Activated CD4-positive, alpha-beta memory T cell treated with anti-CD3 and anti-CD28 coated beads, Interleukin-2, amount 10 ng/mL, durations not matched to agents 7 days and 5 days (primary cell): ENCODE measurements at regions of chr10 and their contacts with region 1.

Region 1: DNA sequence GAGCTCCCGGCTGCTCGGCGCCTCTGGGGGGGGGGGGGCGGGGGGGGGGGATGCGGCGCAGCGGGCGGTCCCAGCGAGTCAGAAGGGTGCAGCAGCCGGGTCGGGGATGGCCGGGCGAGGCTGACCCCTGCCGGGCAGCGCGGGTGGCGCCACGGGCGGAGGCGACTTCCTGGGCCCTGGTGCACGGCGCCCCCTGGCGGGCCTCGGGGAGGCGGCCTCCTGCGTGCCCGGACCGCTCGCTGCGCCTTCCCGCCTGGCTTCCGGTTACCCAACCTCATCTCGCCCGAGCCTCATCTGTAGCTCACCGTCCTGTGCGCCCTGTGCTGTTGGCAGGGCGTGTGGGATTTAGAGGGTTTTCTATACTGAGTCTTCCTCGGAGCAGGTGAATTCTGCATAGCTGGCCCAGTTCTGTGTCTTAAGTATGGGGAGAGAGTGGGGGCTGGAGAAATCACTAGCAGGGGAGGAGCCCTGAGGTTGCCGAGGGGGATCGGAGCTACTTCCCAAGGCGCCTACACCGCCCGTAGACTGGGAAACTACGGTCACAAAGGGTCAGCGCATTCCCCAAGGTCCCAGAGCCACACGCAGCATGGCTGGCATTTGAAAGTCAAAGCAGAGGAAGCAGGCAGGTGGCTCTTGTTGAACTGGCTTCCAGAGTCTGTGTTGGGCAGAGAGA is 28.3 kb upstream of the WDFY4 start:
- DNase-seq: peak; percentile 93
- H3K4me3 Mint-ChIP-seq: peak overlapping the region; percentile 58
- H3K27ac Mint-ChIP-seq: no peak overlapping the region
- H3K4me1 Mint-ChIP-seq: peaks cover 18% of the 10 kb centered on the region
- H3K27me3 Mint-ChIP-seq: peaks cover 25% of the 10 kb centered on the region

Region 2: GRCh38 chr10:48551861-48552591 is 104.4 kb before region 1 on chr10:
- CTCF ChIA-PET with region 1: interaction called, 98 read pairs
- POLR2A ChIA-PET with region 1: interaction called, 3 read pairs
- DNase-seq: peak; percentile 22
- H3K4me3 Mint-ChIP-seq: no peak overlapping the region
- H3K27ac Mint-ChIP-seq: no peak overlapping the region
- H3K4me1 Mint-ChIP-seq: no peaks in the 10 kb centered on the region
- H3K27me3 Mint-ChIP-seq: peaks cover 2% of the 10 kb centered on the region

Region 3: DNA sequence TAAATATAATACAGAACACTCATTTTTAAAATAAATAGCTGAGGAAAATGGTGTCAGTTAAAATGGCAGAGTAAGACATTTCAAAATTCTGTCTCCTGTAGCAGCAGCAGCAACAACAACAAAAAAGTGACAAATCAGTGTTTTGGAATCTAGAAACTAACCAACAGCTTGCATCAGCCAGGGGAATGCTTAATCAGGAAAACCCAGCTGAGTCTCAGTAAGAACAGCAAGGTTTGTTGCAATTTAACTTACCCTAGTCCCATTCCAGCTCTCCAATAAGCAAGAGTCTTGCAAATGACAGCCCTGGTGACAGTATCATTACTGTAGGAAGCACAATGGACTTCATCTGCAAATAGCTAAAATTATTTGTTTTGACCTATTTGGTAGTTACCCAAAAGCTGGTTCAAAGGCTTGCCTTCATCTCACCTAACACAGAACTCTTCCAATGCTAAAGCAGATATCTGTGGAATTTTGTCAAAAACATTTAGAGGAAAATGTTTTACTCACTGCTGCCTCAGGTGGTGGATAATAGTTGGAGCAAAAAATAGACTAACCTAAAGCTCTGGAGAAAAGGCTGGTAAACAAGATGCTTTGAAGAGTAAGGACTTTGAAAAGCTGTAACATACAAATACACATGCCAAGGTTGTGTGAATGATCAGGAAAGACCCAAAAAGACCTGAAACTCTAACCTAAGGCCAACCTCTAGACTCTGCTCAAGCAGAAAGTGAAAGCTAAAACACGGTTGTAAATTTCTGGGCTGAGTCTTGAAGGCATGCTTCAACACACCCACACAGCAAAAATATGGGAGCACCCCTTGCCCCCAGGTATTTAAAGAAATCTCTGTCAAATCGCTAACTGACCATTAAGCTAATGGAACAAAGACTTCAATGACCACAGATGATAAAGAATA is 41.6 kb before region 1 on chr10:
- CTCF ChIA-PET with region 1: interaction called, 125 read pairs
- POLR2A ChIA-PET with region 1: no interaction called
- DNase-seq: no peak
- H3K4me3 Mint-ChIP-seq: no peak overlapping the region
- H3K27ac Mint-ChIP-seq: no peak overlapping the region
- H3K4me1 Mint-ChIP-seq: peaks cover 4% of the 10 kb centered on the region
- H3K27me3 Mint-ChIP-seq: peaks cover 39% of the 10 kb centered on the region

Region 4: GRCh38 chr10:48634198-48634983 is 22.0 kb before region 1 on chr10:
- CTCF ChIA-PET with region 1: interaction called, 42 read pairs
- POLR2A ChIA-PET with region 1: no interaction called
- DNase-seq: peak; percentile 57
- H3K4me3 Mint-ChIP-seq: peak overlapping the region; percentile 20
- H3K27ac Mint-ChIP-seq: peak overlapping the region; percentile 73
- H3K4me1 Mint-ChIP-seq: peaks cover 31% of the 10 kb centered on the region
- H3K27me3 Mint-ChIP-seq: peaks cover 17% of the 10 kb centered on the region

Region 5: DNA sequence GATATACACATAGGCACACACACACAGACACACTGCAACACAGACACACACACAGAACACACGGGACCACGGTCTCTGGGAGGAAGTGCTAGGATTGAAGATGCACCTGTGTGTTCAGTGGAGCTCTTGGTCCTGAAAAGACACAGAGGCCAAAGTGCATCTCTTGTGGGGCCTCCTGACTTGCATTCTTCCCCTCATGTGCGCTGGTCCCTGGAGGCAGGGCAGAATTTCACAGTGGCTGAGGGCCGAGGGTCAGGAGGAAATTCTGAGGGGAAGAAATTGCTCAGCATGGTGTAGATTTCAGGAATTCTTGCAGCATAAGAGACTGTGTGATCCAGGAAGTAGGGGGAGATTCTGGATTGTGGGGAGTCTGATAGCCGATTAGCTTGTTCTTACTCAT is 64.2 kb after region 1 on chr10:
- CTCF ChIA-PET with region 1: no interaction called
- POLR2A ChIA-PET with region 1: no interaction called
- DNase-seq: no peak
- H3K4me3 Mint-ChIP-seq: no peak overlapping the region
- H3K27ac Mint-ChIP-seq: no peak overlapping the region
- H3K4me1 Mint-ChIP-seq: no peaks in the 10 kb centered on the region
- H3K27me3 Mint-ChIP-seq: no peaks in the 10 kb centered on the region

Region 6: GRCh38 chr10:49164559-49165188 is 508.3 kb after region 1 on chr10:
- CTCF ChIA-PET with region 1: interaction called, 23 read pairs
- POLR2A ChIA-PET with region 1: no interaction called
- DNase-seq: peak; percentile 55
- H3K4me3 Mint-ChIP-seq: no peak overlapping the region
- H3K27ac Mint-ChIP-seq: peak overlapping the region; percentile 44
- H3K4me1 Mint-ChIP-seq: peaks cover 46% of the 10 kb centered on the region
- H3K27me3 Mint-ChIP-seq: no peaks in the 10 kb centered on the region